WTC11 (cell line): ENCODE measurements at regions of chr16 and their contacts with region 1.

Region 1: GRCh38 chr16:679814-680622 is at the start of gene STUB1:
- DNase-seq: peak; percentile 97
- ATAC-seq: peak; percentile 41
- H3K4me3 Mint-ChIP-seq: peak within 1 kb of the TSS; percentile 76
- H3K27ac Mint-ChIP-seq: peak within 1 kb of the TSS; percentile 85
- H3K4me1 Mint-ChIP-seq: peaks cover 27% of the 10 kb centered on the region
- H3K27me3 Mint-ChIP-seq: no peaks in the 10 kb centered on the region
- CTCF ChIP-seq: no peak
- total RNA-seq, gene STUB1: 79.0 to 88.2 TPM (median 85.8 TPM) in 3 replicates

Region 2: GRCh38 chr16:667780-668518 is 12.1 kb before region 1 on chr16 and contains the start of gene RHOT2:
- CTCF ChIA-PET with region 1: interaction called, 21 read pairs
- POLR2A ChIA-PET with region 1: no interaction called
- DNase-seq: peak; percentile 93
- ATAC-seq: peak; percentile 95
- H3K4me3 Mint-ChIP-seq: peak within 1 kb of the TSS; percentile 65
- H3K27ac Mint-ChIP-seq: peak within 1 kb of the TSS; percentile 86
- H3K4me1 Mint-ChIP-seq: no peaks in the 10 kb centered on the region
- H3K27me3 Mint-ChIP-seq: no peaks in the 10 kb centered on the region
- CTCF ChIP-seq: peak; percentile 66
- total RNA-seq, gene RHOT2: 245 to 285 TPM (median 250 TPM) in 3 replicates

Region 3: GRCh38 chr16:749001-749400 is 69.0 kb after region 1 on chr16:
- CTCF ChIA-PET with region 1: no interaction called
- POLR2A ChIA-PET with region 1: no interaction called
- DNase-seq: no peak
- ATAC-seq: no peak
- H3K4me3 Mint-ChIP-seq: no peak overlapping the region
- H3K27ac Mint-ChIP-seq: no peak overlapping the region
- H3K4me1 Mint-ChIP-seq: peaks cover 30% of the 10 kb centered on the region
- H3K27me3 Mint-ChIP-seq: no peaks in the 10 kb centered on the region
- CTCF ChIP-seq: no peak

Region 4: DNA sequence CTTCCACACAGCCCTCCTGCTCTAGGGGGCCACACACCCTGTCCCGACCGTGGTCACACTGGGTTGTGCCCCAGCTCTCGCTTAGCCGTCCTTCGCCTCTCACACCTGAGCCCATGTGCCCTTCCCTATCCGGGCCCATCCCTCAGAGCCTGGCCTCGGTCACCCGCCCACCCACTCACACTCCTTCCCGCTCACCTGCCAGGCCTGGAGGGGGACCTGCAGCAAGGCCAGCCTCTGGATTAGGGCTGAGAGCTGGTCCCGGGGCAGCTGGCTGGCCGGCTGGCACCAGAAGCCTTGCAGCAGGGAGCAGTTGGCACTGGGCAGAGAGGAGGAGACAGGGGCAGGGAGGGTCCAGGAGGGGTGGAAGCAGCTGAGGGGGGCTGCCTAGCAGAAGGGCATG is 98.4 kb after region 1 on chr16:
- CTCF ChIA-PET with region 1: no interaction called
- POLR2A ChIA-PET with region 1: no interaction called
- DNase-seq: no peak
- ATAC-seq: no peak
- H3K4me3 Mint-ChIP-seq: no peak overlapping the region
- H3K27ac Mint-ChIP-seq: no peak overlapping the region
- H3K4me1 Mint-ChIP-seq: no peaks in the 10 kb centered on the region
- H3K27me3 Mint-ChIP-seq: no peaks in the 10 kb centered on the region
- CTCF ChIP-seq: no peak